CD4-positive, alpha-beta T cell (primary cell): ENCODE measurements at regions of chr2 and their contacts with region 1.

Region 1: GRCh38 chr2:105977212-105977611 is 216.9 kb downstream of the UXS1 start:
- DNase-seq: peak in 1 of 14 experiments; percentile 28
- ATAC-seq: no peak
- H3K4me3 ChIP-seq: no peak overlapping the region
- H3K4me3 Mint-ChIP-seq: no peak overlapping the region
- H3K27ac ChIP-seq: no peak overlapping the region
- H3K27ac Mint-ChIP-seq: peak overlapping the region; percentile 68
- H3K4me1 ChIP-seq: peaks cover 32% of the 10 kb centered on the region
- H3K4me1 Mint-ChIP-seq: peaks cover 39% of the 10 kb centered on the region
- H3K27me3 ChIP-seq: no peaks in the 10 kb centered on the region
- H3K27me3 Mint-ChIP-seq: no peaks in the 10 kb centered on the region
- CTCF ChIP-seq: no peak

Region 2: GRCh38 chr2:105866216-105867185 is 110.7 kb before region 1 on chr2:
- CTCF ChIA-PET with region 1: no interaction called
- POLR2A ChIA-PET with region 1: no interaction called
- intact Hi-C with region 1: no loop called
- DNase-seq: no peak
- ATAC-seq: no peak
- H3K4me3 ChIP-seq: no peak overlapping the region
- H3K4me3 Mint-ChIP-seq: no peak overlapping the region
- H3K27ac ChIP-seq: no peak overlapping the region
- H3K27ac Mint-ChIP-seq: peak overlapping the region; percentile 97
- H3K4me1 ChIP-seq: peaks cover 96% of the 10 kb centered on the region
- H3K4me1 Mint-ChIP-seq: peaks cover 94% of the 10 kb centered on the region
- H3K27me3 ChIP-seq: no peaks in the 10 kb centered on the region
- H3K27me3 Mint-ChIP-seq: no peaks in the 10 kb centered on the region
- CTCF ChIP-seq: no peak

Region 3: DNA sequence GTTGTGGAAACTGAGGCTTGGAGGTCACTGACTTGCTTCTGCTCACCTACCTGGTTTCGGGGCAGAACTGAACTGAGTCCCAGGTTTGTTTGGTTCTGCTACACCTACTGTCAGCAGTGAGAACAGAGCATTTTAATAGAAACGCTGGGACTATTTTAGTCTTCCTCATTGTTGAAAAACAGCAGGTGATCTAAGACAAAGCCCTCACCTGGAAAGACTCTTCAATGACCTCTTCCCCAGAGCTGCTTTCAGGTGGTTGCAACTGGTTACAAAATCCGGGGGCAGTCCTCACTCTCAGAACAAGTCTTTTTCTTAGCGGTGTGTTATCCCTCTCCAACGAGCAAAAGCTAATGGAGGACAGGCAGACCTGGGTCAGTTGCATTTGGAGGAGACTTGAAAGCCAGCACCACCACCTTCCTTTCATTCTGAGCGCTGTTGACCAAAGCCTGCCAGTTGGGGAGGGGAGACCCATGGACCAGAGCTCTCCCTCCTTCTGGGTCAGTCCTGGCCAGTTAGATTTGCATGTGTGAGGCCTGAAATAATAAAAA is 15.5 kb before region 1 on chr2:
- CTCF ChIA-PET with region 1: interaction called, 3 read pairs
- POLR2A ChIA-PET with region 1: no interaction called
- intact Hi-C with region 1: loop called in 1 of 2 experiments (anchors 2 kb)
- DNase-seq: no peak
- ATAC-seq: no peak
- H3K4me3 ChIP-seq: no peak overlapping the region
- H3K4me3 Mint-ChIP-seq: no peak overlapping the region
- H3K27ac ChIP-seq: no peak overlapping the region
- H3K27ac Mint-ChIP-seq: no peak overlapping the region
- H3K4me1 ChIP-seq: no peaks in the 10 kb centered on the region
- H3K4me1 Mint-ChIP-seq: no peaks in the 10 kb centered on the region
- H3K27me3 ChIP-seq: no peaks in the 10 kb centered on the region
- H3K27me3 Mint-ChIP-seq: no peaks in the 10 kb centered on the region
- CTCF ChIP-seq: no peak

Region 4: DNA sequence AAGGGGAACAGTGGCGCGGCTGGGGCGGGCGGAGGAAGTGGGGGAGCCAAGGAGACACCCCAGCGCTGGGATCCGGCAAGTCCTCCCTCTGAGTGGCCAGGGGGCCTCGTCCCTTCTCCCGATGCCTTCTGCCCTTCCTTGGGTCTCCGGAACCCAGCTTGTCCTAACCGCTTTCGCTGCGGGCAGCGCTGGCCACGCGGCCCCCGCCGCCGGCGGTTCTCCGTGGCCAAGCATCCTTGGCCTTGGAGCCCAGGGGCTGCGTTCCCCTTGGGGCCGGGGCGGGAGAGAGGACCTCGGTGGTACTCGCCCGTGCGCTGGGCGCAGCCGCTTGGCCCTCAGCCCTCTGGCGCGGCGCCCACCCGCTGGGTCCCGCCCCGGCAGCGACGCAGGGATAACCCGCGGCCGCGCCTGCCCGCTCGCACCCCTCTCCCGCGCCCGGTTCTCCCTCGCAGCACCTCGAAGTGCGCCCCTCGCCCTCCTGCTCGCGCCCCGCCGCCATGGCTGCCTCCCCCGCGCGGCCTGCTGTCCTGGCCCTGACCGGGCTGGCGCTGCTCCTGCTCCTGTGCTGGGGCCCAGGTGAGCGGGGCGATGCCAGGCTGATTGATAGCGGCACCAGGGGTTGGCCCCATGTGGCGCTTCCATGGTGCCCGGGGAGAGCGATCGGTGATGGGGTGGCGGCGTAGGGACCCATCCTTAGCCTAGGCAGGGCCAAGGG is 88.2 kb after region 1 on chr2:
- CTCF ChIA-PET with region 1: no interaction called
- POLR2A ChIA-PET with region 1: interaction called, 5 read pairs
- intact Hi-C with region 1: loop called in 1 of 2 experiments (anchors 5 kb)
- DNase-seq: peak in 8 of 14 experiments; percentile 18 to 44 (median 30)
- ATAC-seq: peak; percentile 68
- H3K4me3 ChIP-seq: peak overlapping the region; percentile 55
- H3K4me3 Mint-ChIP-seq: peak overlapping the region; percentile 87
- H3K27ac ChIP-seq: no peak overlapping the region
- H3K27ac Mint-ChIP-seq: peak overlapping the region; percentile 62
- H3K4me1 ChIP-seq: peaks cover 18% of the 10 kb centered on the region
- H3K4me1 Mint-ChIP-seq: peaks cover 49% of the 10 kb centered on the region
- H3K27me3 ChIP-seq: peaks cover 7 to 8% of the 10 kb centered on the region in 2 experiments
- H3K27me3 Mint-ChIP-seq: peaks cover 14% of the 10 kb centered on the region
- CTCF ChIP-seq: no peak